HEK293T (cell line): ENCODE measurements at regions of chr3 and their contacts with region 1.

Region 1: DNA sequence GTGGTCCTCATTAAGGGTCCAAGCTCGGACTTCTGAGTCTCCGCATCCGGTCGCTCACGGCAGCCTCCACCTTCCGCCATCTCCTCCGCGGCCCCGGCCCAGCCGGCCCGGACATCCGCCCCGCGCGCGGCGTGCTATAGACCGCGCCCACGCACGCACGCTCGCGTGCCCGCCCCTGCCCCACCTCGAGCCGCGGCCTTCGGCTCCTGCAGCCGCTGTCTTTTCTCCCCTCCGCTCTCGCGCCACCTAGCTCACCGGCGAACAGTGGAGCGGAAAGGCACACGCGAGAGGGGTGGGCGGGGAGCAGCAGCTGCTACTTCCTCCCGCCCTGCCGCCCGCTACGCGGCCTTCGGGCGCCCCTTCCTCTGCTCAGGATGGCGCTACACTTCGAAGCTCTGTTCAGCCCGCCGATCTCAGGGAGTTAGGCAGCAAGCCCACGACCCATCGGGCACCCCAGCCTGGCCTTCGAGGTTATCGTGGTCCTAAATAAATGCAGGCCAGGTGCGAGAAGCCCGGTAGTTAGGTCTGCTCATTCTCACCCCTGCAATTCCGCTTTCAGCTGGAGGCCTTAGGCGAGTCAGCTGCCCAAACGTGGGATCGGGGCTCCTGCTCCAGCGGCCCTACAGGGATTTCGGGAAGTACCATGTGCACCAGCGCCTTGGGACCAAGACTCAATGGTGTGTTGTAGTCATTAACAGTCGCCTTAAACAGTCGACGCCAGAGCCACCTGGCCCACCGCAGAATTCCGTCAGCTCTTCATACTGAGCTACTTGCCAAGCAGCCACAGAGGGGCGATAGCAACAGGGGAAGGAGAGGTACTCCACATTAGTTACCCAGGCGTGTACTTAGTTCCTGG is at the start of gene USP4:
- DNase-seq: peak; percentile 82

Region 2: GRCh38 chr3:49171119-49171774 is 168.9 kb before region 1 on chr3 and contains the start of gene KLHDC8B:
- CTCF ChIA-PET with region 1: interaction called, 3 read pairs
- POLR2A ChIA-PET with region 1: interaction called, 15 read pairs
- DNase-seq: peak; percentile 89

Region 3: GRCh38 chr3:49253512-49253911 is 86.7 kb before region 1 on chr3:
- CTCF ChIA-PET with region 1: no interaction called
- POLR2A ChIA-PET with region 1: no interaction called
- DNase-seq: no peak

Region 4: GRCh38 chr3:49327485-49327884 is 12.7 kb before region 1 on chr3:
- CTCF ChIA-PET with region 1: interaction called, 3 read pairs
- POLR2A ChIA-PET with region 1: interaction called, 13 read pairs
- DNase-seq: no peak

Region 5: GRCh38 chr3:49358217-49358883 is 18.2 kb after region 1 on chr3 and contains the start of gene GPX1:
- CTCF ChIA-PET with region 1: interaction called, 5 read pairs
- POLR2A ChIA-PET with region 1: interaction called, 42 read pairs
- DNase-seq: peak; percentile 92

Region 6: DNA sequence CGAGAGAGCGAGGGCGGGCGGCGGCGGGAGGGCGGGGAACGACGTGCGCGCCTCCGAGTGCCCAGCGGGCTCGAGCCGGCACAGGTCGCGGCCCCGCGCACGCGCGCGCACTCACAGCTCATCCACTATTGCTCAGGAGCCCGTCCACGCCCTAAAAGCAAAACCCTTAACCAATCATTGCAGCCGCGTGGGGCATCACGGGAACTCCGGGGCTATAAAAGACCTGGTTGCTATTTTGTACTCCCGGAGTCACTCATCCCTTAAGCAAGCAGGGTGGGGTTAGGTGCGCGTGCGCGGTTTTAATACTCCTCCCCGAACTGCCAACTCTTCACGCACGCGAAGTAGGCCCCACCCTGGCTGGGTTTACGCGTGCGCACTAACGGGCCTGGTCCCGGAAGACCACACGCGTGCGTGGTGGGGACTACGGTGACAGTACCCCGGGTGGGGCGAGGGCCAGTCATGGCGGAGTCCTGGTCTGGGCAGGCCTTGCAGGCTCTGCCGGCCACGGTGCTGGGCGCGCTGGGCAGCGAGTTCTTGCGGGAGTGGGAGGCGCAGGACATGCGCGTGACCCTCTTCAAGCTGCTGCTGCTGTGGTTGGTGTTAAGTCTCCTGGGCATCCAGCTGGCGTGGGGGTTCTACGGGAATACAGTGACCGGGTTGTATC is 71.9 kb after region 1 on chr3 and contains the starts of genes RHOA and TCTA:
- CTCF ChIA-PET with region 1: interaction called, 7 read pairs
- POLR2A ChIA-PET with region 1: interaction called, 27 read pairs
- DNase-seq: peak; percentile 96

Region 7: GRCh38 chr3:49428697-49429100 is 88.5 kb after region 1 on chr3:
- CTCF ChIA-PET with region 1: interaction called, 6 read pairs
- POLR2A ChIA-PET with region 1: interaction called, 23 read pairs
- DNase-seq: no peak

Region 8: DNA sequence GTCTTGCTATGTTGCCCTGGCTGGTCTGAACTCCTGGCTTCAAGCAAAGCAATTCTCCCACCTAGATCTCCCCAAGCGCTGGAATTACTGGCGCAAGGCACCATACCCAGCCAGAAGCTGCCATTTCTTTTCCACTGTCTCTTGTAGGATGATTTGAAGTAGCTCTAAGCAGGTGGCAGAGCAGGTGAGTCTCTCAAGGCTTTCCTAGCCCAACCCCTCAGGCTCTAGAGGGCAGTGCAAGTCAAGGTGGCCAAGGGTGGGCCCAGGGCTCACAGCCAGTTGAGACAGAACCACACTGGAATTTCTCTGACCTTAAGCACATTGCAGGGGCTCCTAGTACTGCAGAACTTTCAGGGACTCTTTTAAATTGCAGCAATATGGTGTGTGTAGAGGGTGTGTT is 114.3 kb after region 1 on chr3:
- CTCF ChIA-PET with region 1: interaction called, 18 read pairs
- POLR2A ChIA-PET with region 1: interaction called, 16 read pairs
- DNase-seq: no peak